SK-N-SH (cell line): ENCODE measurements at regions of chr1 and their contacts with region 1.

Region 1: GRCh38 chr1:107430540-107431228 is 289.8 kb downstream of the NTNG1 start:
- DNase-seq: peak; percentile 12
- H3K4me3 ChIP-seq: no peak overlapping the region
- H3K27ac ChIP-seq: no peak overlapping the region
- H3K4me1 ChIP-seq: no peaks in the 10 kb centered on the region; a peak in 1 of 4 replicates
- H3K27me3 ChIP-seq: no peaks in the 10 kb centered on the region
- CTCF ChIP-seq: peak; percentile 84
- EP300 ChIP-seq: no peak
- RAD21 ChIP-seq: peak; percentile 63

Region 2: GRCh38 chr1:107362468-107363140 is 68.1 kb before region 1 on chr1:
- CTCF ChIA-PET with region 1: no interaction called
- POLR2A ChIA-PET with region 1: no interaction called
- DNase-seq: no peak
- H3K4me3 ChIP-seq: no peak overlapping the region
- H3K27ac ChIP-seq: no peak overlapping the region
- H3K4me1 ChIP-seq: peaks cover 3 to 13% of the 10 kb centered on the region in 2 experiments; a peak in 2 of 4 replicates
- H3K27me3 ChIP-seq: no peaks in the 10 kb centered on the region
- CTCF ChIP-seq: no peak
- EP300 ChIP-seq: no peak
- RAD21 ChIP-seq: no peak

Region 3: DNA sequence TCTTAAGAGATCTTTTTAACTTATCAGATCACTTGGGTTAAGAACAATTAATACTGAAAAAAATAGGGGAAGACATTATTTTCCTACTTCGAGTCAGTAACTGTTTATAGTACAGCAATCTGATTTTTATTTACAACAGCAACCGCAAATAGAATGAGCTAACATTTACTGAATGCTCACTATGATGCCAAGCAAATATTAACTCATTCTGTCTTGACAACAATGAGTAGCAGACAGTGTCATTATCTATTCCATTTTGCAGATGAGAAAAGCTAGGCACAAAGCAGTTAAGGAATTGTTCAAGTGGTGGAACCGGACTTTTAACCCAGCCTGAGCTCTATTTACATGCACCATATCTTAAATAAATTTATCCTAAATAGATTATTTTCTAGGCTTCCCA is 16.1 kb before region 1 on chr1:
- CTCF ChIA-PET with region 1: interaction called, 11 read pairs
- POLR2A ChIA-PET with region 1: no interaction called
- DNase-seq: no peak
- H3K4me3 ChIP-seq: no peak overlapping the region
- H3K27ac ChIP-seq: no peak overlapping the region
- H3K4me1 ChIP-seq: no peaks in the 10 kb centered on the region
- H3K27me3 ChIP-seq: no peaks in the 10 kb centered on the region
- CTCF ChIP-seq: no peak
- EP300 ChIP-seq: no peak
- RAD21 ChIP-seq: no peak

Region 4: GRCh38 chr1:107444302-107444701 is 13.6 kb after region 1 on chr1:
- CTCF ChIA-PET with region 1: interaction called, 14 read pairs
- POLR2A ChIA-PET with region 1: no interaction called
- DNase-seq: no peak
- H3K4me3 ChIP-seq: no peak overlapping the region
- H3K27ac ChIP-seq: no peak overlapping the region
- H3K4me1 ChIP-seq: no peaks in the 10 kb centered on the region; a peak in 1 of 4 replicates
- H3K27me3 ChIP-seq: no peaks in the 10 kb centered on the region
- CTCF ChIP-seq: no peak
- EP300 ChIP-seq: no peak
- RAD21 ChIP-seq: no peak

Region 5: DNA sequence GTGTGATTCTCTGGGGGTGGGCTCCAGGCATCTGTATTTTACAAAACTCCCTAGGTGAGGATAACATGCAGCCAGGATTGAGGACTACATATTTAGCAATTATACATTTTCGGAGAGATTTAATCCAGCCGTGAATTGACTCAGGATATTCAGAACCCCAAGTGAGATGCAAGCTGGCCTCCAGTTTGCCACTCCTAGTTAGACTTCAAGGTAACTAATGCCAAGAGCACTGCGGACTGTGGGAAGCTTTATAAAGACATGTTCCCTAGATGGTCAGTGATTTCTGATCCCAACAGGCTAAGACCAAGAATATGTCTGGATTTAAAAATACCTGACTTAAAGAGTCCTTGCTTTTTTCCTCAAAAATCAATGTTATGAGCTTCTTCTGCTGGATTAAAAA is 18.6 kb after region 1 on chr1:
- CTCF ChIA-PET with region 1: interaction called, 14 read pairs
- POLR2A ChIA-PET with region 1: no interaction called
- DNase-seq: no peak
- H3K4me3 ChIP-seq: no peak overlapping the region
- H3K27ac ChIP-seq: no peak overlapping the region
- H3K4me1 ChIP-seq: no peaks in the 10 kb centered on the region; a peak in 1 of 4 replicates
- H3K27me3 ChIP-seq: no peaks in the 10 kb centered on the region
- CTCF ChIP-seq: no peak
- EP300 ChIP-seq: no peak
- RAD21 ChIP-seq: no peak

Region 6: GRCh38 chr1:107750358-107750959 is 319.8 kb after region 1 on chr1:
- CTCF ChIA-PET with region 1: interaction called, 21 read pairs
- POLR2A ChIA-PET with region 1: no interaction called
- DNase-seq: peak; percentile 60
- H3K4me3 ChIP-seq: no peak overlapping the region; a peak in 1 of 4 replicates
- H3K27ac ChIP-seq: no peak overlapping the region
- H3K4me1 ChIP-seq: no peaks in the 10 kb centered on the region; a peak in 1 of 4 replicates
- H3K27me3 ChIP-seq: no peaks in the 10 kb centered on the region
- CTCF ChIP-seq: peak; percentile 89
- EP300 ChIP-seq: 0 out of 4 replicates have a peak, but pooled peaks of 1 of the 2 experiments have one; percentile 8
- RAD21 ChIP-seq: peak; percentile 91